ENCODE measurements at regions of chr1 and their contacts with region 1.

Region 1: DNA sequence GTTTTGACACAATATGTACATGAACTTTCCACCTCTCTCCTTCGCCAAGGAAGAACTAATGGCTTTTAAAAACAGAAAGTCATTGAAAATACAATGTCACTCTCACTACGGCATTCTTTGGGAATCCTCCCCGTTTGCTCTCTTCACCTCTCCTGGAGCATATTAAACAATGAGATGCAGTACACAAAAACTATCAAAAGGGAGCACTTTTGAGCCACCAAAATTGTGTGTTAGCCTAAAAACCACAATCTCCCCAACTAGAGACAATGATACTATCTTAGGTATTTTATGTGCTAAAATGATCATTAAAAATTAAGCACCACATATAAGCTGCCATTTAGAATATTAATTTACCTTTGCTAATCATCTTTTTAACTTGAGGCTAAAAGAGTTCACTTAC is 425.5 kb downstream of the KCTD3 start:
- DNase-seq: peak; percentile 43
- ATAC-seq: peak; percentile 85
- H3K4me3 ChIP-seq: no peak overlapping the region
- H3K27ac ChIP-seq: no peak overlapping the region
- H3K4me1 ChIP-seq: peaks cover 2% of the 10 kb centered on the region
- H3K27me3 ChIP-seq: no peaks in the 10 kb centered on the region
- CTCF ChIP-seq: peak; percentile 71
- POLR2A ChIP-seq: no peak
- RAD21 ChIP-seq: peak; percentile 76

Region 2: DNA sequence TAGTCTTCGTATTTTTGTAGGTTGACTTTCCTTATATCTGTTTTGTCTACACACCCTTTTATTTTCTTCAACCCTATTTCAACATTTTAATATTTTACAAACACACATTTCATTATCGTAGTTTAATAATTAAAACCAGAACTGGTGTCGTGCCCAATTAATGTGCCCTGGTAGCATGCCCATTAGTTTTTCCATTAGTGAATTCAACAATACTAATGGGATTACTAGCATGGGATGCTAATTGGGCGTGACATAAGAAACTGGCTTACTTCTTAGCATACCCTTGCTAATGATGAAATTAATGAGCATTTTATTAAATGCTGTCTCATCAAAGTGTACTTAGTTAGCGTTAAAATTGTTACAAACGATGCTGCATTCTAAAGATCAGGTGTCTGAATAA is 97.9 kb after region 1 on chr1:
- CTCF ChIA-PET with region 1: no interaction called
- POLR2A ChIA-PET with region 1: no interaction called
- dilution Hi-C with region 1: no loop called
- in situ Hi-C with region 1: no loop called
- intact Hi-C with region 1: no loop called
- DNase-seq: no peak
- ATAC-seq: no peak
- H3K4me3 ChIP-seq: no peak overlapping the region
- H3K27ac ChIP-seq: no peak overlapping the region
- H3K4me1 ChIP-seq: no peaks in the 10 kb centered on the region
- H3K27me3 ChIP-seq: no peaks in the 10 kb centered on the region
- CTCF ChIP-seq: no peak
- POLR2A ChIP-seq: no peak
- RAD21 ChIP-seq: no peak

Region 3: DNA sequence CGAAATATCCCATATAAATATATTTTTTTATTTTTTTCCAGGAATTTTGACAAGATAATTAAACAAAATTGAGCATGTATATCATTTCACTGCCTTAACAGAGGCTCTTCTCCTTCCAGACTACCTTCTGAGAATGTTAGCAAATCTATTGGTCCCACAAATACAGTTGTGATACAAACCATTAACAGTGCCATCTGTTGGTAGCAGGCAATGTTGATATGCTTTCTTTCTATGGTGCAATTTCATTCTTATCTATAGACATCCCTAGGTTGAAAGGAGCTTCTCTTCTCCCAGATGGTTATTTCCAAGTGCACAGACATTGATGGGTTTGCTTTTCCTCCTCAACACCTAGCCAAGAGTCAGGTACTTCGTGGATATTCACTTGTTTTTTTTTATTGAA is 127.0 kb after region 1 on chr1:
- CTCF ChIA-PET with region 1: no interaction called
- POLR2A ChIA-PET with region 1: no interaction called
- dilution Hi-C with region 1: no loop called
- in situ Hi-C with region 1: no loop called
- intact Hi-C with region 1: loop called (anchors 2 kb)
- DNase-seq: peak; percentile 50
- ATAC-seq: 0 out of 2 replicates have a peak, but pooled peaks have one; percentile 48
- H3K4me3 ChIP-seq: no peak overlapping the region
- H3K27ac ChIP-seq: no peak overlapping the region
- H3K4me1 ChIP-seq: no peaks in the 10 kb centered on the region
- H3K27me3 ChIP-seq: no peaks in the 10 kb centered on the region
- CTCF ChIP-seq: peak; percentile 61
- POLR2A ChIP-seq: no peak
- RAD21 ChIP-seq: peak; percentile 52

Region 4: DNA sequence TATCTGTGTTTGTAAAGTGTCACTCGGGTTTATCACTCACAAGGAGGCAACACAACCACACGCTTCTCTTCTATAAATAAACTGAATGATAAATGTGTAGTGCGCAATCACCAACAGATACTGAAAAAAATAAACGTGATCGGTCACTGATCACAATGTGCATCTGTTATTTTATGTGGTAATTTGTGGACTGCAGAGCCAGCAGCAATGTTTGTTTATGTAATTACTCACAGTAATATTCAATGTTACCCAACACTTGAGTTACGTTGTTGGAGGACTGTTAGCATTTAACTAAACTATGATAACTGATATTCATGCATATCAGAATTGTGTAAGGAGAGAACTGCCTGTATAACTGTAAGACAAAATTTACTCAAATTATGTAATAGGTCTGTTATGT is 301.1 kb after region 1 on chr1:
- CTCF ChIA-PET with region 1: no interaction called
- POLR2A ChIA-PET with region 1: no interaction called
- dilution Hi-C with region 1: no loop called
- in situ Hi-C with region 1: no loop called
- intact Hi-C with region 1: loop called (anchors 5 kb)
- DNase-seq: peak; percentile 94
- ATAC-seq: peak; percentile 90
- H3K4me3 ChIP-seq: no peak overlapping the region
- H3K27ac ChIP-seq: no peak overlapping the region
- H3K4me1 ChIP-seq: no peaks in the 10 kb centered on the region
- H3K27me3 ChIP-seq: no peaks in the 10 kb centered on the region
- CTCF ChIP-seq: no peak
- POLR2A ChIP-seq: no peak
- RAD21 ChIP-seq: no peak

Region 5: DNA sequence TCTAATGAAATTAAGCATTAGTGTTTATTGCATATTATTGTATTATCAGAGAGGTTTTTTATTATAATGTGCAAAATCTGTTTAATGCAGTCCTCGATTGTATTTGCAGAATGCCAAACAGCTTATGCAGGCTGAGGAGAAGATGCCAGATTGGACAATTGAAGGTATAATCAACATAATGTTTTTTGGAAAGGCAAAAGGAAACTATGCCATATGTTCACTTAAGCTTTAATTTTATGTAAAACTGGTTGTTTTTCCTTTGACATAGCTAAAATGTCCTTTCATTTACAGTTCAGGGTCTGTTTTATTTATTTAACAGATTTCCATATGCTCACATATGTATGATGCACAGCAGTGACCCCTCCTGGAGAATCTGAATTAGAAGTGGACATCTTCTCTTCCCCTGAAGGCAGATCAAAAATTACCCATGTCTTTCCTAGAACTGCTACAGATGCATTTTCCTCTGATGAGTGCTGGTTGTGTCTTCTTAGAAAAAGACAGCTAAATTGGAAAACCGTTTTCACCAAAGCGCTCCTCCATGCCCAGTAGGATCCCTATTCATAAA is 574.1 kb after region 1 on chr1:
- CTCF ChIA-PET with region 1: no interaction called
- POLR2A ChIA-PET with region 1: no interaction called
- dilution Hi-C with region 1: no loop called
- in situ Hi-C with region 1: loop called (anchors 25 kb)
- intact Hi-C with region 1: loop called (anchors 5 kb)
- DNase-seq: peak; percentile 45
- ATAC-seq: peak; percentile 62
- H3K4me3 ChIP-seq: no peak overlapping the region
- H3K27ac ChIP-seq: no peak overlapping the region
- H3K4me1 ChIP-seq: no peaks in the 10 kb centered on the region
- H3K27me3 ChIP-seq: no peaks in the 10 kb centered on the region
- CTCF ChIP-seq: peak; percentile 56
- POLR2A ChIP-seq: no peak
- RAD21 ChIP-seq: peak; percentile 56

Region 6: DNA sequence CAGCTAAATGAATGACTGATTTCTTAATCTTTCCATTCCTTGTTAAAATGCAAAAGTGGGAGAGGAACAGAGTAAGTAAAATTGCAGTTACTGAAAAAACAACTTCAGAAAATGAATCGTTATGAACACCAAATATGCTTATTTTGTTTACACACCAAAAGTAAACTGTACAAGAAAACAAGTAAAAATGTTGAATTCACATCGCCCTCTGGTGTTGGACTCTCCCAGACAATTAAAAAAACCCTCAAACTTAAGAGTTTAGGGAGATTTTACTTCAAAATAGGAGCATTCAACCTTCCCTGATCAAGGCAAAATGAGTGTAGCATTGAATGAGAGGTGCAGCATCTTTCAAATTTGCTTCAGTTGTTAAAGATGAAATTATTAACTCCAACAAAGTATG is 750.0 kb after region 1 on chr1:
- CTCF ChIA-PET with region 1: interaction called, 3 read pairs
- POLR2A ChIA-PET with region 1: no interaction called
- dilution Hi-C with region 1: no loop called
- in situ Hi-C with region 1: loop called (anchors 25 kb)
- intact Hi-C with region 1: loop called (anchors 1 kb)
- DNase-seq: peak; percentile 30
- ATAC-seq: no peak
- H3K4me3 ChIP-seq: no peak overlapping the region
- H3K27ac ChIP-seq: no peak overlapping the region
- H3K4me1 ChIP-seq: no peaks in the 10 kb centered on the region
- H3K27me3 ChIP-seq: no peaks in the 10 kb centered on the region
- CTCF ChIP-seq: peak; percentile 53
- POLR2A ChIP-seq: no peak
- RAD21 ChIP-seq: peak; percentile 36

Region 7: GRCh38 chr1:217660353-217661062 is 1667.9 kb after region 1 on chr1:
- CTCF ChIA-PET with region 1: no interaction called
- POLR2A ChIA-PET with region 1: no interaction called
- dilution Hi-C with region 1: no loop called
- in situ Hi-C with region 1: loop called (anchors 25 kb)
- intact Hi-C with region 1: loop called (anchors 5 kb)
- DNase-seq: peak; percentile 90
- ATAC-seq: peak; percentile 93
- H3K4me3 ChIP-seq: no peak overlapping the region
- H3K27ac ChIP-seq: peak overlapping the region; percentile 74
- H3K4me1 ChIP-seq: peaks cover 5% of the 10 kb centered on the region
- H3K27me3 ChIP-seq: no peaks in the 10 kb centered on the region
- CTCF ChIP-seq: peak; percentile 78
- POLR2A ChIP-seq: no peak
- RAD21 ChIP-seq: peak; percentile 75